GM12878 (cell line): ENCODE measurements at regions of chr7 and their contacts with region 1.

Region 1: DNA sequence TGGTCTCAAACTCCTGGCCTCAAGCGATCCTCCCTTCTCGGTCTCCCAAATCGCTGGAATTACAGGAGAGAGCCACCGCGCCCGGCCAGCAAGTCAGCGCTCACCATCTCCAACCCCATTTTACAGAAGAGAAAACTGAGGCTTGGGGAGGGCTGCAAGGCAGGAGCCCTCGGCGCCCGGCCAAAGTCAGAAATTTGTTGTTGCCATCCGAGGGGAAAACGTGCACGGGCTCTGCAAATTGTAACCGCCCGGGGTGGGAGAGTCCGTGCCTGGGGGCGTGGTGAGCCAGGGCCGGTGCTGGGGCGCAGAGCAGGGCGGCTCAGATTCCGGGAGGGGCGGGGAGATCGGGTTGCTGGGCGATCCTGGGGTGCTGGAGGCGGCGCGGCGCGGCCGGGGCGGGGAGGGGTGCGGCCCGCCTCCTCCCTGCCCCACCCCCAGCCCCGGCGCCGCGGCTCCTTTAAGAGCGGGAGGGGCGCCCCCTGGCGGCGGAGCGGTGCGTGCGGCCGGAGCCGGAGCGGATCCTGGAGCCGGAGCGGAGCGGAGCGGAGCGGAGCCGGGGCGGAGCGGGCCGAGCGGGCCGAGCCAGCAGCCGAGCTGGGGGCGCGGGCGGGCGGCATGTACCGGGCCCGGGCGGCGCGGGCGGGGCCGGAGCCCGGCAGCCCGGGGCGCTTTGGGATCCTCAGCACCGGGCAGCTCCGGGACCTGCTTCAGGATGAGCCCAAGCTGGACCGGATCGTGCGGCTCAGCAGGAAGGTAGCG is at the start of gene VPS37D:
- DNase-seq: peak; percentile 30
- ATAC-seq: peak; percentile 99
- H3K4me3 ChIP-seq: peak within 1 kb of the TSS; percentile 51; the same call in 1 of the 2 replicates
- H3K27ac ChIP-seq: no peak within 1 kb of the TSS
- H3K4me1 ChIP-seq: no peaks in the 10 kb centered on the region
- H3K27me3 ChIP-seq: peaks cover 0 to 6% of the 10 kb centered on the region in 2 experiments; a peak in 3 of 4 replicates
- CTCF ChIP-seq: peak; percentile 75 to 86 (median 77)
- EP300 ChIP-seq: no peak
- POLR2A ChIP-seq: no peak
- RAD21 ChIP-seq: peak; percentile 66
- polyA plus RNA-seq, gene VPS37D: not detected

Region 2: GRCh38 chr7:73446682-73447081 is 220.8 kb before region 1 on chr7:
- CTCF ChIA-PET with region 1: no interaction called
- POLR2A ChIA-PET with region 1: no interaction called
- RAD21 ChIA-PET with region 1: no interaction called
- SMC1A ChIA-PET with region 1: no interaction called
- in situ Hi-C with region 1: no loop called
- intact Hi-C with region 1: no loop called
- DNase-seq: no peak
- ATAC-seq: no peak
- H3K4me3 ChIP-seq: no peak overlapping the region
- H3K27ac ChIP-seq: no peak overlapping the region
- H3K4me1 ChIP-seq: no peaks in the 10 kb centered on the region
- H3K27me3 ChIP-seq: no peaks in the 10 kb centered on the region
- CTCF ChIP-seq: no peak
- EP300 ChIP-seq: no peak
- POLR2A ChIP-seq: no peak
- RAD21 ChIP-seq: no peak

Region 3: DNA sequence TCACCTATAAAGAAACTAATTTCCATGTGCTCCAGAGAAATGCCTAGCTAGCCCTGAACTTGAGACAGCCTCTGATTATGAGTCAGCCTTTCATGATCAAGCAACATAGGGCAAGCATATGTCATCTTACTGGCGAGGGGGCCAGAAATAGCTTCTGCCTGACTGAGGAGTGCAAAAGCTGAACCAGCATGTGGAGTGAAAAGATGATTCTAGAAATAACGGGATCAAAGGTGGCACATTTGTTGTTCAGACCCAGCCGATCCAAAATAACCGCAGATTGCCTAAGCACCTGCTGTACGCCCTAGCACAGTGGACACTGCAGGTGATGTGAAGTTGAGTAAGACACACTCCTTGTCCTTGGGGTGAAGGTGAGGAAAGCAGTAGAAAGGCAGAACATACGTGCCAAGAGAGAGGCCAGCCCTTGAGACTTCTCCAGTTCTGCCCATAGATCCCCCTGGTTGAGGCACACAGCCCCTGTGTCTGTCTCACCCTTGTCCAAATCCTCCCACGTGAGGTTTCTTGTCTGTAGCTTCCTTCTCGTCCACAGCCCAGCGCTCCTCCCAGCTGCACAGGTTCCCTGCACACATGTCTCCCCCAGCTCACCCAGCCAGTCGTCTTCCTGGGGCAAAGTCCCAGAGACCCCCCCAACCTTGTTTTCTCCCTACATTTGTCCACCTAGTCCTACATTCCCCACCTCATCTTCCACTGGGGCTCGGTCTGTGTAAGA is 107.3 kb before region 1 on chr7:
- CTCF ChIA-PET with region 1: no interaction called
- POLR2A ChIA-PET with region 1: no interaction called
- RAD21 ChIA-PET with region 1: no interaction called
- SMC1A ChIA-PET with region 1: no interaction called
- in situ Hi-C with region 1: no loop called
- intact Hi-C with region 1: no loop called
- DNase-seq: no peak
- ATAC-seq: peak; percentile 39
- H3K4me3 ChIP-seq: no peak overlapping the region
- H3K27ac ChIP-seq: peak overlapping the region; percentile 4; the same call in 1 of the 2 replicates
- H3K4me1 ChIP-seq: peaks cover 18% of the 10 kb centered on the region
- H3K27me3 ChIP-seq: no peaks in the 10 kb centered on the region
- CTCF ChIP-seq: no peak
- EP300 ChIP-seq: no peak
- POLR2A ChIP-seq: no peak
- RAD21 ChIP-seq: no peak

Region 4: DNA sequence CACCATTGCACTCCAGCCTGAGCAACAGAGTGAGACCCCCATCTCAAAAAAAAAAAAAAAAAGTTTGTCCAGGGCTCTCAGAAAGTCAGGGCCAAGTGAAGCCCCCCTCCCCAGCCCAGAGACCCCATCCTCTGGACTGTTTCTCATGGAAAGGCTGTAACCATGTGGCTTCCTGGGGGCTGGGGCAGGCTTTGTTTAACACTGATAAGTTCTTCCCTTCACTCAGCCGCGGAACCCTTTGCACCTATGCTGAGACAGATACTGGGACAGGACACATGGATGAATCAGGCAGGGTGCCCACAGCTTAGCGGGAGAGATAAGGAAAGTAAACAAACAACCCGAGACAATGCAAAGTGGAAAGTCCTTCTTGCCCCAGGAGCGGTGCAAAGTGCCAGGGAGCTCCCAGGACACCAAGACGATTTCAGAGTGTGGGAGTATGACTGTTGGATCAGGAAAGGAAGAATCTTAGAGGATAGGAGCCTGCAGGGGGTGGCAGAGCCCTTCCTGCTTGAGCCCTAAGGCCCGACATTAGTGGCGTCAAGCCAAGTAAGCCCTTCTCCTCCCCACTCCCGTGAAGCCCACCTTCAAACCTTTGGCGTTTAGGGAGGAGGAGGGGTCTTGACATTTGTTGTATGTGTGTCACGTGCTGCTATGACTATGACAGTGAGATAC is 54.8 kb before region 1 on chr7:
- CTCF ChIA-PET with region 1: interaction called, 12 read pairs
- POLR2A ChIA-PET with region 1: no interaction called
- RAD21 ChIA-PET with region 1: interaction called, 6 read pairs
- SMC1A ChIA-PET with region 1: no interaction called
- in situ Hi-C with region 1: no loop called
- intact Hi-C with region 1: loop called (anchors 5 kb)
- DNase-seq: no peak
- ATAC-seq: no peak; the same call in 2 of the 3 replicates
- H3K4me3 ChIP-seq: no peak overlapping the region
- H3K27ac ChIP-seq: no peak overlapping the region
- H3K4me1 ChIP-seq: no peaks in the 10 kb centered on the region
- H3K27me3 ChIP-seq: no peaks in the 10 kb centered on the region; a peak in 2 of 4 replicates
- CTCF ChIP-seq: peak in 1 of 3 experiments; percentile 10; a peak in 1 of 6 replicates
- EP300 ChIP-seq: no peak
- POLR2A ChIP-seq: no peak
- RAD21 ChIP-seq: peak; percentile 6; the same call in 1 of the 2 replicates

Region 5: DNA sequence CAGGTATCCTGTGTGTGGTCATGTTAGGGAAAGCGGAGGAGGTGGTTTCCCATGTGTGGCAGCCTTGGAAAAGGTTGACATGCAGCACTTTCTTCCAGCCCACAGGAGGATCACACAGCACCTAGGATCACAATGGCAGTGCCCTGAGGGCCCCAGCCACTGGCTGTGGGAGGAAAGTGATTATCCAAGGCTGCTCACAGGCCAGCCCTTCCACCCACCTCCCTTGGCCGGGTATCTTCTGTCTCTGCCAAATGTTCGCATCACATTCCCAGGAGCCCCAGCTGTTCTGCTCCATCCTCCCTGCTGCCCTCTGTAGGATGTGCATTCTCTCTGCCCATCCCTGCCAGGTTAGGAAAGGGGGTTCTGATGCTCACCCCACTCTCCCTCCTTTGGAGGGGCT is 40.7 kb before region 1 on chr7:
- CTCF ChIA-PET with region 1: interaction called, 3 read pairs
- POLR2A ChIA-PET with region 1: no interaction called
- RAD21 ChIA-PET with region 1: no interaction called
- SMC1A ChIA-PET with region 1: no interaction called
- in situ Hi-C with region 1: no loop called
- intact Hi-C with region 1: loop called (anchors 5 kb)
- DNase-seq: no peak
- ATAC-seq: no peak
- H3K4me3 ChIP-seq: no peak overlapping the region
- H3K27ac ChIP-seq: no peak overlapping the region
- H3K4me1 ChIP-seq: no peaks in the 10 kb centered on the region
- H3K27me3 ChIP-seq: peaks cover 0 to 6% of the 10 kb centered on the region in 2 experiments; a peak in 2 of 4 replicates
- CTCF ChIP-seq: no peak
- EP300 ChIP-seq: no peak
- POLR2A ChIP-seq: no peak
- RAD21 ChIP-seq: no peak

Region 6: GRCh38 chr7:73683056-73683964 is 15.8 kb after region 1 on chr7 and contains the starts of genes BUD23 and DNAJC30:
- CTCF ChIA-PET with region 1: no interaction called
- POLR2A ChIA-PET with region 1: no interaction called
- RAD21 ChIA-PET with region 1: no interaction called
- SMC1A ChIA-PET with region 1: no interaction called
- in situ Hi-C with region 1: no loop called
- intact Hi-C with region 1: no loop called
- DNase-seq: peak; percentile 71
- ATAC-seq: peak; percentile 98
- H3K4me3 ChIP-seq: peak within 1 kb of the TSS; percentile 91
- H3K27ac ChIP-seq: peak within 1 kb of the TSS; percentile 81
- H3K4me1 ChIP-seq: peaks cover 15% of the 10 kb centered on the region
- H3K27me3 ChIP-seq: no peaks in the 10 kb centered on the region
- CTCF ChIP-seq: no peak
- EP300 ChIP-seq: no peak
- POLR2A ChIP-seq: peak; percentile 97
- RAD21 ChIP-seq: no peak
- polyA plus RNA-seq, gene BUD23: 36.4 to 89.9 TPM
- polyA plus RNA-seq, gene DNAJC30: 2.1 to 3.5 TPM

Region 7: DNA sequence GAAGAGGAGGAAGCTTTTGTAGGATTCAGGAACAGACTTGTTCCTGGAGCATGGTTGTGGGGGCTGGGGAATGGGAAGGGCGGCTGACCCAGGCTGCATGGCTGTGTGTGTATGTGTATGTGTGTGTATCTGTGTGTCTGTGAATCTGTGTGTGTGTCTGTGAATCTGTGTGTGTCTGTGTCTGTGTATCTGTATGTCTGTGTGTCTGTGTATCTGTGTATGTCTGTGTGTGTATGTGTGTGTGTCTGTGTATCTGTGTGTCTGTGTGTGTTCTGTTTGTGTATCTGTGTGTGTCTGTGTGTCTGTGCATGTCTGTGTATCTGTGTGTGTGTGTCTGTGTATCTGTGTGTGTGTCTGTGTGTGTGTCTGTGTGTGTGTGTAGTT is 58.6 kb after region 1 on chr7:
- CTCF ChIA-PET with region 1: no interaction called
- POLR2A ChIA-PET with region 1: no interaction called
- RAD21 ChIA-PET with region 1: no interaction called
- SMC1A ChIA-PET with region 1: interaction called, 3 read pairs
- in situ Hi-C with region 1: no loop called
- intact Hi-C with region 1: loop called (anchors 5 kb)
- DNase-seq: no peak
- ATAC-seq: peak; percentile 48
- H3K4me3 ChIP-seq: no peak overlapping the region
- H3K27ac ChIP-seq: no peak overlapping the region
- H3K4me1 ChIP-seq: no peaks in the 10 kb centered on the region; the same call in 1 of the 2 replicates
- H3K27me3 ChIP-seq: no peaks in the 10 kb centered on the region
- CTCF ChIP-seq: no peak
- EP300 ChIP-seq: no peak
- POLR2A ChIP-seq: no peak
- RAD21 ChIP-seq: no peak